Natural killer cell (primary cell): ENCODE measurements at regions of chr15 and their contacts with region 1.

Region 1: DNA sequence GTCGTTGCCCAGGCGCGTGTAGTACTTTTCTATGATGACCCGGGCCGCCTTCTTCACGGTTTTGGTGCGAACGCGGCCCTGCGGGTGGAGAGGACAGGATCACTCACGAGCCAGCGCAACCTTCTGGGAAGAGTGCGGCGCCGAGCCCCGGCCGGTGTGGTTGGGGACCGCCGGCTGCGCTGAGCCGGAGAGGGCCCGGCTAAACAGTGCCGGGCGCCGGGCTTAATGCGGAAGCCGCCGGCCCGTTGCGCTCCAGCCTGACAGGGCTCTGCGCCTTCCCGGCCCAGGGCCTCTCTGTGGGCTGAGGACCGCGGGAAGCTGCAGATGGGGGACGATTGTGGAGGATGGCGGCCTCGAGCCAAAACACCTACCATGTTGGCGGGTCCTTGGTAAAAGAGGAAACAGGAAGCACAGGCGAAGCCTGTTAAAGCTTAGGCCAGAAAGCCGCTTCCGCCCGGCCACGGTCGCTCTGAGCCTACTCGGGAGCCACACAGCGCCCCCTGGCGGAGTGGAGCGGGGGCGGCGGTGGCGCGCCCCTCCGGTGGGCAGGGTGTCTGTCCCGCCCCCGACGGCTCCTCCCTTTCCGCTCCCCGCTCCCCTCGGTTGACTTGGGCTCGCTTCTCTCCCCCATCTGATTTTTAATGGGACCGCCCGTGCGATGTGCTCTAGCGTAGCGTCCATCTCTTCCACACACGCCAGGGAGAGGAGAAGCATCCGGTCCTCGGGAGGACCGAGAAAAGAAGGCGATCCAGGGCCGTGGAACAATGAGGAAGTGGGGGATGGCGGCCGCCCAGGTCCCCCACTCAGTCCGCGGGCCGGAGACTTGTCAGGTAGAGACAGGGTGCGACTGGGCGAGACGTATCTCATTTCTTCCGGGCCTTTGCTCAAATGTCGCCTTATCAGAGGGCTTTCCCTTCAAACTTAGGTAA is at the start of gene RPS17:
- DNase-seq: peak; percentile 98 to 99
- ATAC-seq: peak; percentile 94 to 100 (median 94)
- H3K4me3 ChIP-seq: peak within 1 kb of the TSS; percentile 83
- H3K4me3 Mint-ChIP-seq: peak within 1 kb of the TSS; percentile 96
- H3K27ac ChIP-seq: peak within 1 kb of the TSS; percentile 87
- H3K27ac Mint-ChIP-seq: peak within 1 kb of the TSS; percentile 92 to 95
- H3K4me1 ChIP-seq: peaks cover 23% of the 10 kb centered on the region
- H3K4me1 Mint-ChIP-seq: peaks cover 35 to 44% of the 10 kb centered on the region in 2 donors
- H3K27me3 ChIP-seq: no peaks in the 10 kb centered on the region
- H3K27me3 Mint-ChIP-seq: peaks cover 0 to 4% of the 10 kb centered on the region in 2 donors
- CTCF ChIP-seq: peak; percentile 97
- total RNA-seq, gene RPS17: 1,035 to 1,314 (median 1,130) TPM

Region 2: GRCh38 chr15:82680200-82681102 is 140.1 kb after region 1 on chr15:
- intact Hi-C with region 1: no loop called
- DNase-seq: peak; percentile 35 to 92
- ATAC-seq: peak; percentile 79 to 94 (median 91)
- H3K4me3 ChIP-seq: peak overlapping the region; percentile 56
- H3K4me3 Mint-ChIP-seq: peak overlapping the region; percentile 87
- H3K27ac ChIP-seq: peak overlapping the region; percentile 24
- H3K27ac Mint-ChIP-seq: peak overlapping the region; percentile 47 to 51
- H3K4me1 ChIP-seq: peaks cover 17% of the 10 kb centered on the region
- H3K4me1 Mint-ChIP-seq: peaks cover 8 to 17% of the 10 kb centered on the region in 2 donors
- H3K27me3 ChIP-seq: peaks cover 10% of the 10 kb centered on the region
- H3K27me3 Mint-ChIP-seq: peaks cover 22 to 28% of the 10 kb centered on the region in 2 donors
- CTCF ChIP-seq: no peak

Region 3: DNA sequence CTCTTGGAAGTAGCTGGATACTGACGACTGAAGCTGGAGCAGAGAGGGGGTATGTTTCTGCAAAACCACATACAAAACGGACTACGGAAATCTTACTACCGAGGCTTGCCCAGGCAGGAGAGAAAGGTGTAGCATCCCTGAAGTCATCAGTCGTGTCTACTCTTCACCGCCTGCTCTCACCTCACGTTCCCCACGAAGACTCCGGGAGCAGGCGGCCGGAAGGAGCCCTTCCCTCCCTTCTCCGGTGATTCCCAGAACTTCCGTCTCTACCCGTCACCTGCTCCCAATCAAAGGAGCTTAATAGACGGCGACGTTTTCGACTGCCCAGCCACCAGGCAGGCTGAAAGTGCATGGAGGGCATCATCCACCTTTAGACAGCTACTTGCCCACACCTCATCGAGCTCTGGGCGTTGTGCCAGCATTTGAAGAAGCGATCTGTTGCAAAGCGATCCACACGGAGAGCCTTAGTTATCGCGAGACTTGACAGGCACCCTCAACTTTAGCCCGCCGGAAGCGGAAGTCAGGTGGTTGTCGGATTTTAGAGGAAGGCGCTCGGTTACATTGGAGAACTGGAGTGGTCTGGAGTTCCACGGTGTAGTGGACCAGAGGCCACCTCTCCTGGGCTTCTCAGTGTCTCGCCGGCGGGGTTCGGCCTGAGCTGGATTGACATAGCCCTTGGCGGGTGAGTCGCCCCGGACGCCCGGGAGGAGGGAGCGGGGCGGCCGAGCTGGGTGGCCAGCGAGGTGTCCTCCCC is 445.5 kb after region 1 on chr15 and contains the start of gene RAMAC:
- intact Hi-C with region 1: loop called (anchors 1 kb)
- DNase-seq: peak; percentile 84 to 98
- ATAC-seq: peak; percentile 91 to 95 (median 94)
- H3K4me3 ChIP-seq: peak within 1 kb of the TSS; percentile 94
- H3K4me3 Mint-ChIP-seq: peak within 1 kb of the TSS; percentile 97
- H3K27ac ChIP-seq: peak within 1 kb of the TSS; percentile 72
- H3K27ac Mint-ChIP-seq: peak within 1 kb of the TSS; percentile 90 to 94
- H3K4me1 ChIP-seq: peaks cover 15% of the 10 kb centered on the region
- H3K4me1 Mint-ChIP-seq: peaks cover 22 to 30% of the 10 kb centered on the region in 2 donors
- H3K27me3 ChIP-seq: no peaks in the 10 kb centered on the region
- H3K27me3 Mint-ChIP-seq: no peaks in the 10 kb centered on the region
- CTCF ChIP-seq: no peak
- total RNA-seq, gene RAMAC: 15.4 to 27.2 (median 25.7) TPM